GM12878 (cell line): ENCODE measurements at regions of chr1 and their contacts with region 1.

Region 1: DNA sequence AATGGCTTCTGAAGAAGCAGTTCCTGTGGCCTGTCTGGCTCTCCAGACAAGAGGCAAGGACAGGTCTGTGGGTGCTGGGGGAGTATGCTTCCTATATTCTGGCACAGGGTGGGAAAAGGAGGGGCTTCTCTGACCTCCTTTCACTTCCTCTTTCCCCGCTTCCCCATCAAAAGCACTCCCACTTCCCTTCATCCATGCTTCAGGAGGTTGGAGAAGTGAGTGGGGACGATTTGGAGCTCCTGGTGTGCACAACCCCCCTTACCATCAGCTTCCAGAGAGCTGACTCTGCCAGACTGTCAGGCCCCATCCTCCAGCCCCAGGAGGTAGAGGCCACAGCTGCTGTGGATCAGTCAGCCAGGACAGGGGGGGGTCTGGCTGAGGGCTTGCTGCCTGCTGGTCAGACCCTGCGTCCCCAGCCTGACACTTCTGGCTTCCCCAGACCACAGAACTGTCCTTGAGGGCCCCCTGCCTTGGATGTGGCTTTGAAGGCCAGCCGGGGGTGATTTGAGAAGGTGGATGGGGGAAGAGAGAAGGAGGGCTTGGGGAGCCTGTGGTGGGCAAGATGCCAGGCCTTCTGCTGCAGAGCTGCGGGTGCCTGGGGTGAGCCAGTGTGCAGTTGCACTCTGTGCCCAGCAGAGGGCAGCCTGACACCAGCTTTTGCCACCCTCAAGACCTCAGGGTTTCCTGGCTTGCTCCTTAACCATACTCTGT is 21.5 kb upstream of the TMEM222 start:
- DNase-seq: peak; percentile 32
- ATAC-seq: peak; percentile 96
- H3K4me3 ChIP-seq: no peak overlapping the region
- H3K27ac ChIP-seq: no peak overlapping the region; the same call in 1 of the 2 replicates
- H3K4me1 ChIP-seq: peaks cover 5% of the 10 kb centered on the region
- H3K27me3 ChIP-seq: no peaks in the 10 kb centered on the region
- CTCF ChIP-seq: peak; percentile 99; a peak in 5 of 6 replicates
- EP300 ChIP-seq: no peak
- POLR2A ChIP-seq: no peak
- RAD21 ChIP-seq: peak; percentile 92

Region 2: GRCh38 chr1:27102707-27103491 is 197.6 kb before region 1 on chr1:
- CTCF ChIA-PET with region 1: interaction called, 149 read pairs
- POLR2A ChIA-PET with region 1: no interaction called
- RAD21 ChIA-PET with region 1: interaction called, 14 read pairs
- SMC1A ChIA-PET with region 1: interaction called, 11 read pairs
- in situ Hi-C with region 1: no loop called
- intact Hi-C with region 1: no loop called
- DNase-seq: no peak
- ATAC-seq: peak; percentile 73
- H3K4me3 ChIP-seq: no peak overlapping the region
- H3K27ac ChIP-seq: no peak overlapping the region
- H3K4me1 ChIP-seq: peaks cover 24% of the 10 kb centered on the region
- H3K27me3 ChIP-seq: no peaks in the 10 kb centered on the region
- CTCF ChIP-seq: peak; percentile 95 to 98 (median 97)
- EP300 ChIP-seq: no peak
- POLR2A ChIP-seq: no peak
- RAD21 ChIP-seq: peak; percentile 95

Region 3: DNA sequence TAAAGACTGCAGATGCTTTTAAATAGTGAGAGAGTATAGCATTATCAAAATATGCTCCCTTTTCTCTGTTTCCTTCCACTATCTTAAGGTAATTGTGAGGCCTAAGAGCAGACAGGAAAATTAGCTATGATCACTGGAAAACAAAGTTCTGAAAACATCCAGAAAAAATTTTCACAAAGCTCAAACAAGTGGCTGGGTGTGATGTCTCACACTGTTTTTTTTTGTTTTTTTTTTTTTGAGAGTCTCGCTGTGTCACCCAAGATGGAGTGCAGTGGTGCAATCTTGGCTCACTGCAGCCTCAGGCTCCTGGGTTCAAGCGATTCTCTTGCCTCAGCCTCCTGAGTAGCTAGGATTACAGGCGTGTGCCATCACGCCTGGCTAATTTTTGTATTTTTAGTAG is 58.8 kb before region 1 on chr1:
- CTCF ChIA-PET with region 1: interaction called, 11 read pairs
- POLR2A ChIA-PET with region 1: no interaction called
- RAD21 ChIA-PET with region 1: no interaction called
- SMC1A ChIA-PET with region 1: no interaction called
- in situ Hi-C with region 1: no loop called
- intact Hi-C with region 1: no loop called
- DNase-seq: no peak
- ATAC-seq: no peak
- H3K4me3 ChIP-seq: no peak overlapping the region
- H3K27ac ChIP-seq: no peak overlapping the region
- H3K4me1 ChIP-seq: peaks cover 5% of the 10 kb centered on the region
- H3K27me3 ChIP-seq: no peaks in the 10 kb centered on the region
- CTCF ChIP-seq: no peak
- EP300 ChIP-seq: no peak
- POLR2A ChIP-seq: no peak
- RAD21 ChIP-seq: no peak

Region 4: DNA sequence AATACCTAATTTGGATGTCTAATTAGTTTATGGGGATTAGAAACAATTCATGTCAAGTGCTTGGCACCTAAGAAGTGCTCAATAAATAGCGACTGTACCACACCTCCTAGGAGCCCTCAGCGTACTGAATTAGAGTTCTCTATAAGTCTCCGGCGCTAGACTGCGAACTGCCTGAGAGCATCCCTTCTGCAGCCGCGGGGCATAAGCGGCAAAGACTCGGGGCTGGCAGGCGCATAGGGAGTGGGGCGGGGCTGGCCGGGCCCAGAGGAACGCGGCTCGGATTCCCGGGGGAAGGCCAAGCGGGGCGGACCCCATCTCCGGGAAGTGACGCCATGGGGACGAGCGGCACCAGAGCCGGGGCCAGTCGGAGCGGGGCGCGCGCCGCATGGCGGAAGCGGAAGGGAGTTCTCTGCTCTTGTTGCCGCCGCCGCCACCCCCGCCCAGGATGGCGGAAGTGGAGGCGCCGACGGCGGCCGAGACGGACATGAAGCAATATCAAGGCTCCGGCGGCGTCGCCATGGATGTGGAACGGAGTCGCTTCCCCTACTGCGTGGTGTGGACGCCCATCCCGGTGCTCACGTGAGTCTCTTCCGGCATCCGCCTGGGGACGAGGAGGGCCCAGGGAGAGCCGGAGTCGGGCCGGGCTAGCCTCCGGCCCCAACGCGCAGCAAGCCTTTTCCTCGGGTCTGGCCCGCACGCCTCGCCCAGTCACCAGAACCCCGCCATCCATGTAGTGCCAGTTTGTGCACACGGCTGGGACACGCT is 21.5 kb after region 1 on chr1 and contains the start of gene TMEM222:
- CTCF ChIA-PET with region 1: interaction called, 19 read pairs
- POLR2A ChIA-PET with region 1: no interaction called
- RAD21 ChIA-PET with region 1: interaction called, 4 read pairs
- SMC1A ChIA-PET with region 1: interaction called, 3 read pairs
- in situ Hi-C with region 1: no loop called
- intact Hi-C with region 1: no loop called
- DNase-seq: peak; percentile 76
- ATAC-seq: peak; percentile 98
- H3K4me3 ChIP-seq: peak within 1 kb of the TSS; percentile 95
- H3K27ac ChIP-seq: peak within 1 kb of the TSS; percentile 96
- H3K4me1 ChIP-seq: no peaks in the 10 kb centered on the region
- H3K27me3 ChIP-seq: no peaks in the 10 kb centered on the region
- CTCF ChIP-seq: no peak
- EP300 ChIP-seq: peak in 1 of 2 experiments; percentile 63; a peak in 2 of 4 replicates
- POLR2A ChIP-seq: peak; percentile 93
- RAD21 ChIP-seq: no peak
- polyA plus RNA-seq, gene TMEM222: 3.8 to 7.8 TPM

Region 5: GRCh38 chr1:27365372-27366112 is 65.0 kb after region 1 on chr1:
- CTCF ChIA-PET with region 1: interaction called, 14 read pairs
- POLR2A ChIA-PET with region 1: interaction called, 4 read pairs
- RAD21 ChIA-PET with region 1: interaction called, 4 read pairs
- SMC1A ChIA-PET with region 1: interaction called, 4 read pairs
- in situ Hi-C with region 1: no loop called
- intact Hi-C with region 1: no loop called
- DNase-seq: no peak
- ATAC-seq: peak; percentile 83
- H3K4me3 ChIP-seq: peak overlapping the region; percentile 76
- H3K27ac ChIP-seq: no peak overlapping the region
- H3K4me1 ChIP-seq: peaks cover 15% of the 10 kb centered on the region
- H3K27me3 ChIP-seq: no peaks in the 10 kb centered on the region
- CTCF ChIP-seq: no peak
- EP300 ChIP-seq: 0 out of 4 replicates have a peak, but pooled peaks of 1 of the 2 experiments have one; percentile 18
- POLR2A ChIP-seq: peak; percentile 50
- RAD21 ChIP-seq: no peak

Region 6: GRCh38 chr1:27858072-27858958 is 557.8 kb after region 1 on chr1:
- CTCF ChIA-PET with region 1: no interaction called
- POLR2A ChIA-PET with region 1: no interaction called
- RAD21 ChIA-PET with region 1: no interaction called
- SMC1A ChIA-PET with region 1: no interaction called
- in situ Hi-C with region 1: no loop called
- intact Hi-C with region 1: no loop called
- DNase-seq: no peak
- ATAC-seq: peak; percentile 91
- H3K4me3 ChIP-seq: no peak overlapping the region
- H3K27ac ChIP-seq: no peak overlapping the region
- H3K4me1 ChIP-seq: peaks cover 17% of the 10 kb centered on the region
- H3K27me3 ChIP-seq: no peaks in the 10 kb centered on the region
- CTCF ChIP-seq: peak; percentile 99 to 100 (median 99); a peak in 5 of 6 replicates
- EP300 ChIP-seq: no peak
- POLR2A ChIP-seq: no peak
- RAD21 ChIP-seq: peak; percentile 100